ENCODE measurements at regions of chr10 and their contacts with region 1.

Region 1: GRCh38 chr10:103966671-103967447 is at the start of gene SLK:
- DNase-seq: no peak
- ATAC-seq: peak; percentile 75
- H3K4me3 ChIP-seq: peak within 1 kb of the TSS; percentile 87
- H3K27ac ChIP-seq: peak within 1 kb of the TSS; percentile 77
- H3K4me1 ChIP-seq: no peaks in the 10 kb centered on the region; the same call in 1 of the 2 replicates
- H3K27me3 ChIP-seq: no peaks in the 10 kb centered on the region
- CTCF ChIP-seq: no peak
- EP300 ChIP-seq: no peak
- POLR2A ChIP-seq: peak; percentile 92
- RAD21 ChIP-seq: no peak
- polyA plus RNA-seq, gene SLK: 6.0 to 6.4 TPM

Region 2: DNA sequence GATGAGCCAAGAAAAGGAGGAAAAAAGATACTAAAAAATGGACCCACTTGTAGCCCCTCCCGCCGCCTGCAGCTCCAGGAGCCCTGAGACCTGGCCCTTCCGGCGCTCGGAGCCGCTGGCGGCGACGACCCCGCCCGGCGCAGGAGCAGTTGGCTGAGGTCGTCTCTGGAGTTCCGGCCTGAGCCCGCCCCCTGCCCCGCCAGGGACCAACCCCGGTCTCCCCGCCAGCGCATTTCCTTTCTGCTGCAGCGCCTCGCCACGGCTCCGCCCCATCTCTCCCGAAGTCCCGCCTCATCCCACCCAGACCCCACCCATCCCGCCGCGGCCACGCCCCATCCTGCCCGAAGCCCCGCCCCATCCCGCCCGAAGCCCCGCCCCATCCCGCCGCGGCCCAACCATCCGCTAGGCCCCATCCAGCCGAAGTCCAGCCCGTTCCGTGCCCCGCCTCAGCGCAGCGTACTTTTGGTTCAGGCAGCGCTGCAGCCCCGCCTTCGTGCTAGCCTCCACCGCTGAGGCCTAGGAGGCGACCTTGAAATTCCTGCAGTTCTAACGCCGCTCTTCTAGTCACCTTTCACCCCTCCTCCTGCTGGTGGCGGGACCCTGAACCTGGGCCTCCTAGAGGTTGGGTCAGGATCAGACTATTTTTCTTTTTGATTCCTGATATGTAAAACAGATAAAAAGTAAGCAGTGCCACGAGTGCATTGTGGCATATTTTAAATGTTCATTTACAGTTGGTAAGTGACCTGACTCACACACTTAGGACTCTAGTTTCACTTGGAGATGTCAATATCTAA is 48.6 kb before region 1 on chr10 and contains the start of gene STN1:
- CTCF ChIA-PET with region 1: interaction called, 4 read pairs
- POLR2A ChIA-PET with region 1: interaction called, 6 read pairs
- RAD21 ChIA-PET with region 1: no interaction called
- SMC1A ChIA-PET with region 1: interaction called, 7 read pairs
- in situ Hi-C with region 1: no loop called
- intact Hi-C with region 1: loop called (anchors 5 kb)
- DNase-seq: peak; percentile 77
- ATAC-seq: peak; percentile 96
- H3K4me3 ChIP-seq: peak within 1 kb of the TSS; percentile 83
- H3K27ac ChIP-seq: peak within 1 kb of the TSS; percentile 83
- H3K4me1 ChIP-seq: peaks cover 12% of the 10 kb centered on the region
- H3K27me3 ChIP-seq: no peaks in the 10 kb centered on the region
- CTCF ChIP-seq: 0 out of 6 replicates have a peak, but pooled peaks of 1 of the 3 experiments have one; percentile 3
- EP300 ChIP-seq: 0 out of 4 replicates have a peak, but pooled peaks of 1 of the 2 experiments have one; percentile 14
- POLR2A ChIP-seq: peak; percentile 85
- RAD21 ChIP-seq: no peak
- polyA plus RNA-seq, gene STN1: 26.5 to 27.8 TPM

Measured in GM12878 (cell line).